SK-N-SH (cell line): ENCODE measurements at regions of chr10 and their contacts with region 1.

Region 1: GRCh38 chr10:103481974-103482531 is 3.0 kb upstream of the CALHM3 start:
- DNase-seq: peak; percentile 77
- H3K4me3 ChIP-seq: no peak overlapping the region; a peak in 1 of 4 replicates
- H3K27ac ChIP-seq: no peak overlapping the region
- H3K4me1 ChIP-seq: peaks cover 0 to 8% of the 10 kb centered on the region in 2 experiments; a peak in 1 of 4 replicates
- H3K27me3 ChIP-seq: no peaks in the 10 kb centered on the region
- CTCF ChIP-seq: peak; percentile 71
- EP300 ChIP-seq: no peak
- RAD21 ChIP-seq: peak; percentile 59

Region 2: GRCh38 chr10:103350501-103351260 is 131.4 kb before region 1 on chr10 and contains the start of gene PCGF6:
- CTCF ChIA-PET with region 1: no interaction called
- POLR2A ChIA-PET with region 1: no interaction called
- DNase-seq: peak; percentile 98
- H3K4me3 ChIP-seq: peak within 1 kb of the TSS; percentile 64 to 89
- H3K27ac ChIP-seq: peak within 1 kb of the TSS; percentile 68 to 71
- H3K4me1 ChIP-seq: no peaks in the 10 kb centered on the region; a peak in 1 of 4 replicates
- H3K27me3 ChIP-seq: no peaks in the 10 kb centered on the region
- CTCF ChIP-seq: 0 out of 2 replicates have a peak, but pooled peaks have one; percentile 16
- EP300 ChIP-seq: 0 out of 4 replicates have a peak, but pooled peaks of 1 of the 2 experiments have one; percentile 15
- RAD21 ChIP-seq: no peak
- polyA plus RNA-seq, gene PCGF6: 5.1 and 5.3 TPM in 2 replicates

Region 3: DNA sequence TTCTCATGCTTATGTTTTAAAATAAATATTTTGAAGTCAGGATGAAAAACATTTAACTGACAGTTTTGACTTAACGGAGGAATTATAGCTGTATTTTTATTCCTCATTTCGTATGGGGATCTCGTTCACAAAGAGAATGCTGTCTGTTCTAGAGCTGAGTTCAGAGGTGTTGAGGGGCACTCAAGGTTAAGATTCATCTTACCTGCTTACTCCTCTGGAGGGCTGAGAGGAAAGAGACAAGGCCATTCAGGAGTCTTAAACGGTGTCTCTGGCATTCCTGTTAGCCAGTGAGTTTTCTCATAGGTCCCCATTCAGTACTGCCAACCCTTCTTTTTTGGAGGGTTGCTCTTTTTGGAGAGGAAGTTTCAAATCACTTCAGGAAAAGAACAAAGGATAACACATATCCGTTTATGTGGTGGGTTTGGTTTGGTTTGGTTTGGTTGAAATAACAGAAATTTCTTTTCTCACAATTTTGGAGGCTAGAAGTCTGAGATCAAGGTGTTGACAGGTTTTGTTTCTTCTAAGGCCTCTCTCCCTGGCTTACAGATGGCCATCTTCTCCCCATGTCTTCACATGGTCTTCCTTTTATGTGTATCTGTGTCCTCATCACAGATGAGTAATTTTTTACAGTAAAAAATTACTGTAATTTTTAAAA is 52.9 kb before region 1 on chr10:
- CTCF ChIA-PET with region 1: interaction called, 12 read pairs
- POLR2A ChIA-PET with region 1: no interaction called
- DNase-seq: no peak
- H3K4me3 ChIP-seq: no peak overlapping the region
- H3K27ac ChIP-seq: no peak overlapping the region
- H3K4me1 ChIP-seq: no peaks in the 10 kb centered on the region
- H3K27me3 ChIP-seq: no peaks in the 10 kb centered on the region
- CTCF ChIP-seq: no peak
- EP300 ChIP-seq: no peak
- RAD21 ChIP-seq: no peak

Region 4: GRCh38 chr10:103451831-103452505 is 30.1 kb before region 1 on chr10 and contains the start of gene CALHM2:
- CTCF ChIA-PET with region 1: interaction called, 19 read pairs
- POLR2A ChIA-PET with region 1: no interaction called
- DNase-seq: peak; percentile 82
- H3K4me3 ChIP-seq: peak within 1 kb of the TSS in 1 of 2 experiments; percentile 10; a peak in 1 of 4 replicates
- H3K27ac ChIP-seq: peak within 1 kb of the TSS in 1 of 2 experiments; percentile 48; a peak in 1 of 4 replicates
- H3K4me1 ChIP-seq: peaks cover 0 to 18% of the 10 kb centered on the region in 2 experiments; a peak in 1 of 4 replicates
- H3K27me3 ChIP-seq: no peaks in the 10 kb centered on the region
- CTCF ChIP-seq: no peak
- EP300 ChIP-seq: no peak
- RAD21 ChIP-seq: no peak
- polyA plus RNA-seq, gene CALHM2: 0.10 and 0.23 TPM in 2 replicates

Region 5: DNA sequence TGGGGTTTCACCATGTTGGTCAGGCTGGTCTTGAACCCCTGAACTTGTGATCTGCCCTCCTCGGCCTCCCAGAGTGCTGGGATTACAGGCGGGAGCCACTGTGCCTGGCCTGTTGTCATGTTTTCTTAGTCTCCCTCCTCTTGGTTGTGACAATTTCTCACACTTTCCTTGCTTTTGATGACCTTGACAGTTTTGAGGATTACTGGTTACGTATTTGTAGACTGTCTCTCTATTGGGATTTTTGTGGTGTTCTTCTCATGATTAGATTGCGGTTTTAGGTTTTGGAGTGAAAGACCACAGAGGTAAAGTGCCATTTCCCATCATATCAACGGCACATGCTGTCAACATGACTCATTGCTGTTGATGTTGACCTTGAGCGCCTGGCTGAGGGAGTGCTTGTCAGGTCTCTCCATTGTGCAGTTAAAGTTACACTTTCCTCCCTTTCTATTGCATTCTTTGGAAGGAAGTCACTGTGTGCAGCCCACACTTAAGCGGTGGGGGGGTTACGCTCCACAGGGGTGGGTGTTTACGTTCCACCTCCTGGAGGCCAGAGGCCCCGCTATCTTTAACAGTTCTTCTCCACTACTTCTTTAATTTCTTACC is 22.2 kb after region 1 on chr10:
- CTCF ChIA-PET with region 1: interaction called, 16 read pairs
- POLR2A ChIA-PET with region 1: no interaction called
- DNase-seq: peak; percentile 27
- H3K4me3 ChIP-seq: no peak overlapping the region
- H3K27ac ChIP-seq: peak overlapping the region in 1 of 2 experiments; percentile 48; a peak in 2 of 4 replicates
- H3K4me1 ChIP-seq: peaks cover 6 to 40% of the 10 kb centered on the region in 2 experiments; a peak in 3 of 4 replicates
- H3K27me3 ChIP-seq: peaks cover 15% of the 10 kb centered on the region
- CTCF ChIP-seq: no peak
- EP300 ChIP-seq: peak in 1 of 2 experiments; percentile 37; a peak in 1 of 4 replicates
- RAD21 ChIP-seq: no peak

Region 6: DNA sequence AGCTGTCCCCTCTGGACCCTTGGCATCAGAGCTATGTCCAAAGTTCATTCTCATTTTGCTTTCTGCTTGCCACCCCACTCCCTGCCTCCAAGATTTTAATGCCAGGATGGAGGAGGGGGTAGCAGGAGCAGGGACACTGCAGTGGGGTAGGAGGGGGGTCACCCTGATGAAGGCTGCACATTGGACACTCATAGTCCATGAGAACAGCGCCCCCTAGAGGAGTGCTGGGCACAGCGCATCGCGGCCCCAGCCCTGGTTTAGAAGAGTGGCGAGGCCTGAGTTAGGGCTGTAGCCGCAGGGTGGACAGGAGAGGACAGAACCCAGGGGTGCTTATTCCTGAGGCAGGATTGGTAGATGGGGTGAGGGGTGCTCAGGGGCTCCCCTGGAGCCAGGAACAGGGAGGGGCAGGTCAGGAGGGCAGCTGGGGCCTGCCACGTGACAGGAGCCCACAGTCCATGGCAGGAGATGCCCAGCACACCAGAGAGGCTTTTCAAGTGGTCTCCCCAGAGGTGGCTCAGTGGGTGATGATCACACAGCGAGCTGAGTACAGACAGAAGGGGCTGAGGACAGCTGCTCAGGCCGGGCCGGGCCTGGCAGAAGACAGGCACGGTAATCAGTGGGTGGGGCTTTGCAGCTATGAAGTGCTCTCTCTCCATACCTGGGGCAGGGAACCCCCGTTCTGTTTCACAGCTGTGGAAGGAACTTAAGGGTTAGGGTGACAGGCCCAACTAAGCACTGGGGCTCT is 82.9 kb after region 1 on chr10:
- CTCF ChIA-PET with region 1: interaction called, 20 read pairs
- POLR2A ChIA-PET with region 1: no interaction called
- DNase-seq: peak; percentile 83
- H3K4me3 ChIP-seq: no peak overlapping the region
- H3K27ac ChIP-seq: no peak overlapping the region
- H3K4me1 ChIP-seq: peaks cover 0 to 24% of the 10 kb centered on the region in 2 experiments; a peak in 1 of 4 replicates
- H3K27me3 ChIP-seq: no peaks in the 10 kb centered on the region; the same call in 1 of the 2 replicates
- CTCF ChIP-seq: peak; percentile 68
- EP300 ChIP-seq: no peak
- RAD21 ChIP-seq: peak; percentile 63

Region 7: GRCh38 chr10:103645141-103646054 is 163.3 kb after region 1 on chr10:
- CTCF ChIA-PET with region 1: no interaction called
- POLR2A ChIA-PET with region 1: no interaction called
- DNase-seq: no peak
- H3K4me3 ChIP-seq: no peak overlapping the region
- H3K27ac ChIP-seq: peak overlapping the region in 1 of 2 experiments; percentile 62; a peak in 2 of 4 replicates
- H3K4me1 ChIP-seq: peaks cover 6 to 32% of the 10 kb centered on the region in 2 experiments; a peak in 2 of 4 replicates
- H3K27me3 ChIP-seq: no peaks in the 10 kb centered on the region
- CTCF ChIP-seq: no peak
- EP300 ChIP-seq: no peak
- RAD21 ChIP-seq: no peak